ENCODE measurements at regions of chr9 and their contacts with region 1.

Region 1: GRCh38 chr9:105157130-105157583 is 87.3 kb upstream of the SLC44A1 start:
- DNase-seq: peak; percentile 84
- H3K27ac ChIP-seq: peak overlapping the region; percentile 28; the same call in 1 of the 2 replicates
- CTCF ChIP-seq: peak; percentile 84

Region 2: DNA sequence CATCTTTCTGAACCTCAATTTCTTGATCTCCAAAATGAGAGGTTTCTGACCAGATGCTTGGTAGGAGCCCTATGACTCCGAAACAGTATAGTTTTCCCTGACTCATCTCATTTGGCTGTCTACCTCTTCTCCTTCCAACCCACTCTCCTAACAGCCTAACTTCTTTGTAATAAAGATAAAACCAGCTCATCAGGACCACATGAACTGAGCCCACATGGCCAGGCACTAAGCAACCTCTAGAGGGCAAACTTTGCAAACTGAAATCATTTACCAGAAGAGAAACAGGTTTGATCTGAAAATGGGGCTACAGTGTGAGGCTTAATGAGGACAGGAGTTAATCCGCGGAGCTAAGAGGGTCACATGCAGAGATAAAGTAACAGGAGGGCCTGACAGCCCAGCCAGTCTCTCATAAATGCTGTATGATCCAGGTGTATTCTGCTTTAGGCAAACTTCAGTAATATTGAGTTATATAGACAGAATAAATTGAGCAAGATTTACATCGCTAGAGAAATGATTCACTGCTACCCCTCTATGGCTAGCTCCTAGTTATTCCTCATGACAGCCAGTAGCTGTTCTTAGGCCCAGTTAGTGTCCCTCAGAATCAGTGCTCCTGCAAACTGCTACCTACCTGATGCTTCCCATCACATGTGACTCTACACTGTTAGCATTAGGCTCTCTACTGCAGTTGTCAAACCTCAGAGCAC is 293.8 kb before region 1 on chr9:
- CTCF ChIA-PET with region 1: interaction called, 10 read pairs
- POLR2A ChIA-PET with region 1: no interaction called
- DNase-seq: peak; percentile 87
- H3K27ac ChIP-seq: no peak overlapping the region
- CTCF ChIP-seq: peak; percentile 97

Region 3: DNA sequence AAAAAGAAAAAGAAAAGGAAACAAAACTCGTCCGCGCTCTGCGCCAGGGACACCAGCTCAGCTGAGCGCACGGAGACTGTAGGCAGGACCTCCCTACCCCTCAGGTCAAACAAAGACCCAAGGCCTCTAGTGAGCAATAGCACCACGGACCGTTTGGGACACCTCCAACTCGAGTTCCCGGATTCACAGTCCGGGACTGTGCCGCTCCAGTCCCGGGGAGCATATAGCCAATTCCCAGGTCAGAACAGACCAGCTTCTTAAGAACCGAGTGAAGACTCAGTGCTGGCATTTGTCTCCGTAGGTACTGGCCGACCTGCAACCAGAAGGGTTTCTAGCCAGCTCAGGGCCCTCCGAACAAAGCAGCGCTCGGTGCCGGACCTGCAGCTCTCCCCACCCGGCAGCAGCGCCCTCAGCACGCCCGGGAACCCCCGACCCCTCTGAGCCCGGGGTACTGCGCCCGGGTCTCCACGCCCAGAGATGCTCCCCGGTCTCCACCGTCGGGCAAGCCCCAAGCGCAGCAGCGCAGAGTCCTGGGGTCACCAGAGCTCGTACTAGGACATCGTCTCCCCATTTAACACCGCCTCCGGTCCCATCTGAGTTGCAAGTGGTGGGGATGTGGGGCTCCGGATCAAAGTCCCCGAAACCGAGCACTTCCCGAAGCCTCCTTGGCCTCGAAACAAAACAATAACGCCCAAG is 229.8 kb before region 1 on chr9:
- CTCF ChIA-PET with region 1: interaction called, 10 read pairs
- POLR2A ChIA-PET with region 1: no interaction called
- DNase-seq: peak; percentile 63
- H3K27ac ChIP-seq: peak overlapping the region; percentile 91
- CTCF ChIP-seq: no peak

Region 4: GRCh38 chr9:105414947-105415661 is 257.9 kb after region 1 on chr9:
- CTCF ChIA-PET with region 1: interaction called, 21 read pairs
- POLR2A ChIA-PET with region 1: no interaction called
- DNase-seq: peak; percentile 74
- H3K27ac ChIP-seq: no peak overlapping the region
- CTCF ChIP-seq: peak; percentile 96

Measured in RWPE1 (cell line).